ENCODE measurements at regions of chr1 and their contacts with region 1.

Region 1: DNA sequence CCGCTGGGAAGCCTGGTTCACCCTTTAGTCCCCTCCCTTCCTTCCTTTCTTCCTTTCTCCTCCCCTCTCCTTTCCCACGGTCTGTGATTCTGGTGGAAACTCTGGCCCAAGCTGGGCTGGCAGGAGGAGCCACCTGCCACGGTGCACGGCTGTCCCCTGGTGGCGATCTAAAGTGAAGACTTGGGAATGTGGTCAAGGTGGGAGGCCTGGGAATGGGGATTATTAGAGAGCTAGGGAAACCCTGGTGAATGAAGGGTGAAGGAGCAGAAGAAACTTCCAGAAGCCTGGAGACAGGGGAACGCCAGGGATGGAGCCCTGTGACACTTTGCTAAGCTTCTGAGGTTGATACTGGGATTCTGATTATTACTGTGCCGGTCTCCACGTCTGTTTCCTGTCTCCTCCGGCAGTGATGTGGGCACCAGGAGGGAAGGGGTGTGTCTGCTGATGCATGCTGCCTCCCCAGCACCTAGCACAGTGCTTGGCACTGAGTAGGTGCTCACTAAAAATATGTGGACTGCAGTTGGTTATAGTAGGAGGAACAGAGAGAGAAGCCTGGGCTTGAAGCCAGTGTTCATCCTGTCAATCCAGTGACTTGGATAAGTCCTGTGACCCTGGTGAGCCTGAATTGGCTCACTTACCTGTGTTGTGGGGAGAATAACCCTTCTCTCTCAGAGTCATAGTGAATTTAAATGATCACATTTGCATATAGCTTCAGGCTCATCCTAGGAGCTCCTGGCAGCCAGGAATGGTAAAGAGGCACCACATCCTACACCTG is 71.2 kb upstream of the NBPF3 start:
- DNase-seq: peak; percentile 68
- H3K4me3 Mint-ChIP-seq: no peak overlapping the region
- H3K27ac Mint-ChIP-seq: no peak overlapping the region
- H3K4me1 Mint-ChIP-seq: peaks cover 7% of the 10 kb centered on the region
- H3K27me3 Mint-ChIP-seq: peaks cover 7% of the 10 kb centered on the region

Region 2: DNA sequence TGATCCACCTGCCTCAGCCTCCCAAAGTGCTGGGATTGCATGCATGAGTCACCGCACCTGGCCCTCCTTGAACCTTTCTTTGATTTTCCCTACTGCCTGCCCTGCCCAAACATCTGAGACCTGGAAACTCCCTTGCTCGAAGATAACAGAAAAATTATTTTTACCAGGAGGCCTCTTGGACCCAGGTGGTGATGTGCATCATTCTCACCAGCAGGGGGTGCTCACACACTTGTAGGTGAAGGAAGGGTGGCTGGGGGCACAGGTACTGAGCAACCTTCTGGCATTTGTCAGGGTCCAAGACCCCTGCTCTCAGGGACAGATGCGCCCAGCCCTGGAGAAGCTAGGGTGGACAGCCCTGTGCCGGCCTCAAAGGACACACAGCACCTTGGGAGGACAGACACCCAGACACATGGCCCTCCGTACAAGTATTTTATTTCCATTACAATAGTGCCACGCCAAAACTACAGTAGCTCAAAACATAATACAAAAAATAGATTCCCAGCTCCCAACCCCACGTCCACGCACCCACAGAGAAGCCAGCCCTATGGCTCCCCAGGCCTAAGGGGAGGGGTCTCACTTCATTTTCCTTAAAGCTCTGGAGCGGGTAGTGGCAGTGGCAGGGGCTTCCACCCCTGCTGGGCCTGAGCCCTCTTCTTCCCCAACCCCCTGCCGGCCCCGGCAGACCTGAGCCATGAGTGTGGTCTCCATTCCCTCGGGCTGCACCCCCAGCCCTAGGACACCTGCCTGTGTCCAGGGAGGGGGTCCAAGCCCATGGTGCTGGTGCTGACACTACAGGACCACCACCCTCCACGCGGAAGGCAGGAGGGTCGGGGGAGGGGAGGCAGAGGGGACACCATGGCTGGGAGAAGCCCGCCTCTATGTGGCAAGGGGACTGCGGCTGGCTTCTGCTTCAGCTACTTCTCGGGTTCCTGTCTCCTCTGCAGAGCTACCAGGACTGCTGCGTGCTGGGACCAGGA is 151.6 kb before region 1 on chr1:
- CTCF ChIA-PET with region 1: interaction called, 57 read pairs
- DNase-seq: peak; percentile 80
- H3K4me3 Mint-ChIP-seq: no peak overlapping the region
- H3K27ac Mint-ChIP-seq: peak overlapping the region; percentile 62
- H3K4me1 Mint-ChIP-seq: peaks cover 4% of the 10 kb centered on the region
- H3K27me3 Mint-ChIP-seq: no peaks in the 10 kb centered on the region

Region 3: DNA sequence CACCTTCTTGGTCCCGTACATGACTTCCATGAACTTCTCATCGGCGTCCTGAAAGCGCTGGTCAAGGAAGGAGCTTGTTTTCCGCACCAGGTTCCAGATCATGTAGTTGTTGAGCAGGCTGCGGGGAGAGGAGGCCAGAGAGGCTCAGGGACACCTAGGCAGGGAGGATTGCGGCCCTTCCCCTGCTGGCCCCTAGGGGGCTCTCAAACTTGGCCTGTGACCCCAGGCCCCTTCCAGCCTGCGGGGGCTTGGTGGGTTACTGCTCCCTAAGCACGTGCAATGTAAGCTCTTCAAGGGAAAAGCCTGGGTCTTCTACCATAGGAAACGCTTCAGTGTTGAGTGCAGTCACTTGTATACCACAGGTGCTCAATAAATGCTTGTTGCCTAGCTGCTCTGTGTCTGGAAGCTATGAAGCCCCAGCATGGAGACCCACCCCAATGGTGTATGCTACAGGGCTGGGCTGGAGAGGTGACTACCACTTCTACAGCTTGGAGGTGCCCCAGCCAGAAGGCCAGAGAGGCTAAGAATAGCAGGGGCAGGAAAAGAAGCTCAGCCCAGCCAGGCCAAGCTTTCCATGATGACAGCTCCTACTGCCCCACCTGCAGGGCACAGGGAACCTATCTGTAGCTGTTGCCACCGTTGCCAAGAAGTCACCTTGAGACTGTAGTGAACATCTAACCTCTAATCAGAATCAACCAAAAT is 123.6 kb before region 1 on chr1:
- CTCF ChIA-PET with region 1: interaction called, 12 read pairs
- DNase-seq: no peak
- H3K4me3 Mint-ChIP-seq: no peak overlapping the region
- H3K27ac Mint-ChIP-seq: no peak overlapping the region
- H3K4me1 Mint-ChIP-seq: no peaks in the 10 kb centered on the region
- H3K27me3 Mint-ChIP-seq: no peaks in the 10 kb centered on the region

Region 4: DNA sequence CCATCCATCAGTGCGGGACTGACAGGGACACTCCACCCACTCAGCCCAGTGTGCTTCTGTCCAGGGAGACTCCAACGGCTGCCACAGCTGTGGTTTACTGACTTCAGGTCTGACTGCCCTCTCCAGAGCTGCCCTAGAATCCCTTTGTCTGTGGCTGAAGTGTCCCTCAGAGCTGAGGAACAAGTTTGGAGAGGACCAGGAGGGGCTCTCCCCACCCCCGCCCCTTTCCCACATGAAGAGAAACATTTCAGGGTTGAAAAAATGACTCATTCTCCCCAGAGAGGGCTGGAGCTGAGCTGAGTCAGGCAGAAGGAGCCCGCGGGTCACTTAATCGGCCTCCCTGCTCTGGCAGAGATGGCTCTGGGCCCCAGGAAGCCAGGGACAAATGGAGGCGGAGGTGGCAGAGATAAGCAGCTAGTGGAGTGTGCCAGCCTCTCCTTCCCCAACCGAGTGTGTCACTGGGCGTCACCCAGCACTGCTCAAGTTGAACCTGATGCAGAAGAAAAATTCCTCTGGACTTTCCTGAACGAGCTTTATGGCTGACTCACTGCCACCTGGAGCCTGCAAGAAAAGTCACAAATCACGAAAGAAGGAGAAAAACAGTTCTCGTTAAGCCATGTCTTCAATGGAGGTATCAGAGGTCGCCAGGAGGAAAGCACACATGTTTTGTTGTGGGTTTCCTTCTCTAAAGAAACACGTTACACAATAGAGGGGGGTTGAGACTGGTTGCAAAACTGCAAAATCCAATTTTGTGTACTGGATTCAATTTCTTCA is 44.1 kb before region 1 on chr1:
- CTCF ChIA-PET with region 1: interaction called, 10 read pairs
- DNase-seq: peak; percentile 65
- H3K4me3 Mint-ChIP-seq: peak overlapping the region; percentile 45
- H3K27ac Mint-ChIP-seq: peak overlapping the region; percentile 92
- H3K4me1 Mint-ChIP-seq: peaks cover 81% of the 10 kb centered on the region
- H3K27me3 Mint-ChIP-seq: no peaks in the 10 kb centered on the region

Region 5: DNA sequence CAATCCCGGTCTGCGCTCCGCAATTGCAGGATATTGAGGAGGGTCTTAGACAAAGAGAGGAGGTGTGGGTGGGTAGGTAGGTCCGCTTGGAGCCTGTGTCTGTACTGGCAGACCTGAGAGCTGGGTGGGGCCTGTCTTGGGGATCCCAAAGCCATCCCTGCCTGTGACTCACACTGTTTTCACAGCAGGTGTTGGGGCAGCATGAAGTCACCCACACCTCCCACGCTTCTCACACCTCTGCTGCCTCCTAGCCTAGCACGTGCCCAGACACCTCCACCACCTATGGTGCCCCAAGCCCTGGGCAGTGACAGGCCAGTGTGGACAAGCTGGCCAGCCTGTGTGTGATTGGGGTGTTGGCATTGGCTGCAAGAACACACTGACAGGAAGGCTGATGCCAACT is 12.7 kb before region 1 on chr1:
- CTCF ChIA-PET with region 1: interaction called, 12 read pairs
- DNase-seq: no peak
- H3K4me3 Mint-ChIP-seq: no peak overlapping the region
- H3K27ac Mint-ChIP-seq: no peak overlapping the region
- H3K4me1 Mint-ChIP-seq: no peaks in the 10 kb centered on the region
- H3K27me3 Mint-ChIP-seq: peaks cover 29% of the 10 kb centered on the region

Region 6: GRCh38 chr1:21534674-21535378 is 166.1 kb after region 1 on chr1:
- CTCF ChIA-PET with region 1: interaction called, 12 read pairs
- DNase-seq: peak; percentile 45
- H3K4me3 Mint-ChIP-seq: no peak overlapping the region
- H3K27ac Mint-ChIP-seq: no peak overlapping the region
- H3K4me1 Mint-ChIP-seq: no peaks in the 10 kb centered on the region
- H3K27me3 Mint-ChIP-seq: peaks cover 71% of the 10 kb centered on the region

Measured in activated naive CD4-positive, alpha-beta T cell treated with anti-CD3 and anti-CD28 coated beads, Interleukin-2, amount 10 ng/mL, durations not matched to agents 7 days and 5 days (primary cell).